PC-3 (cell line): ENCODE measurements at regions of chr10 and their contacts with region 1.

Region 1: DNA sequence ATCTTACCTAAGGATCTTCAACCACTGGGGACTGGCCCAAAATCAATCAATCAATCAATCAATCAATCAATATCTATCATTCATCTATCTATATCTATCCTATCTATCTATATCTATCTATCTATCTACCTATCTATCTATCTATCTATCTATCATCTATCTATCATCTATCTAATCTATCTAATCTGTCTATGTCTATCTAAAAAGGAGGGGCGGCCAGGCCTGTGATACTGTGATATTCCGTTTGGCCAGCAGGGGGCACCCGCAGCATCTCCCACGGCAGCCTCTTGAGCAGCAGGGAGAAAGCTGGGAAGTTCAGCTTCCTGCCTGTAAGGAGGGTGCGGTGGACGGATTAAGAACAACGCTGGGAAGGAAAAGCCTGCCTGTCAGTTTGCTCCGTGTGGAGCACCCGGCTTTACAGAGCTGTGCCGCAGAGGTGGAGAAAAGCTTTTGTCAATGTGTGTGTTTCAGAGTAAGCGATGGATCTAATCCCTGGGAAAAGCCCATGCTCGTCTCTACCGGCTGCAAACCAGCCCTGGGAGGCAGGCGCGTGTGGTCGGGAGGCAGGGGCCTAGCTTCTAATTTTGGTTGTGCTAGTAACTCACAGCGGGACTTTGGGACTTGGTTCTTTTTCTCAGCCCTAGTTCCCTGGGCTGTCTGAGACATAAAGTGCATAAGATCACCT is 125.0 kb downstream of the SH2D4B start:
- DNase-seq: peak; percentile 68
- ATAC-seq: peak; percentile 84
- H3K4me3 ChIP-seq: peak overlapping the region; percentile 50; the same call in 1 of the 2 replicates
- H3K27ac ChIP-seq: no peak overlapping the region
- H3K4me1 ChIP-seq: no peaks in the 10 kb centered on the region
- H3K27me3 ChIP-seq: no peaks in the 10 kb centered on the region
- CTCF ChIP-seq: peak; percentile 82

Region 2: DNA sequence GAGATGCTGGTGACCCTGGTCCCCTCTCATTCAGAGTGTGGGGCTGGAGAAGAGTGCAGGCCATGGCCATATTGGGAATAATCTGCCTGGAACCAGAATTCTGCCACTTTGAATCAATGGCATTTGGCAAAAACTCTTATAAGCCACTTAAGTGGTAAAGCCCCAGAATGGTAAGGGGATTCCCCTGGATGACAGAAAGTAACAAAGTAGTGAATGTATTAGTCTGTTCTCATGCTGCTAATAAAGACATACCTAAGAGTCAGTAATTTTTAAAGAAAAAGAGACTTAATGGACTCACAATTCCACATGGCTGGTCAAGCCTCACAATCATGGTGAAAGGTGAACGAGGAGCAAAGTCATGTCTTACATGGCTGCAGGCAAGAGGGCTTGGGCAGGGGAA is 123.6 kb after region 1 on chr10:
- CTCF ChIA-PET with region 1: no interaction called
- POLR2A ChIA-PET with region 1: no interaction called
- intact Hi-C with region 1: no loop called
- DNase-seq: no peak
- ATAC-seq: no peak
- H3K4me3 ChIP-seq: no peak overlapping the region
- H3K27ac ChIP-seq: no peak overlapping the region
- H3K4me1 ChIP-seq: no peaks in the 10 kb centered on the region
- H3K27me3 ChIP-seq: no peaks in the 10 kb centered on the region
- CTCF ChIP-seq: no peak

Region 3: GRCh38 chr10:80924063-80924952 is 261.6 kb after region 1 on chr10:
- CTCF ChIA-PET with region 1: no interaction called
- POLR2A ChIA-PET with region 1: no interaction called
- intact Hi-C with region 1: loop called (anchors 10 kb)
- DNase-seq: peak; percentile 43
- ATAC-seq: no peak
- H3K4me3 ChIP-seq: no peak overlapping the region
- H3K27ac ChIP-seq: no peak overlapping the region
- H3K4me1 ChIP-seq: no peaks in the 10 kb centered on the region
- H3K27me3 ChIP-seq: no peaks in the 10 kb centered on the region
- CTCF ChIP-seq: peak; percentile 67